WTC11 (cell line): ENCODE measurements at regions of chr11 and their contacts with region 1.

Region 1: DNA sequence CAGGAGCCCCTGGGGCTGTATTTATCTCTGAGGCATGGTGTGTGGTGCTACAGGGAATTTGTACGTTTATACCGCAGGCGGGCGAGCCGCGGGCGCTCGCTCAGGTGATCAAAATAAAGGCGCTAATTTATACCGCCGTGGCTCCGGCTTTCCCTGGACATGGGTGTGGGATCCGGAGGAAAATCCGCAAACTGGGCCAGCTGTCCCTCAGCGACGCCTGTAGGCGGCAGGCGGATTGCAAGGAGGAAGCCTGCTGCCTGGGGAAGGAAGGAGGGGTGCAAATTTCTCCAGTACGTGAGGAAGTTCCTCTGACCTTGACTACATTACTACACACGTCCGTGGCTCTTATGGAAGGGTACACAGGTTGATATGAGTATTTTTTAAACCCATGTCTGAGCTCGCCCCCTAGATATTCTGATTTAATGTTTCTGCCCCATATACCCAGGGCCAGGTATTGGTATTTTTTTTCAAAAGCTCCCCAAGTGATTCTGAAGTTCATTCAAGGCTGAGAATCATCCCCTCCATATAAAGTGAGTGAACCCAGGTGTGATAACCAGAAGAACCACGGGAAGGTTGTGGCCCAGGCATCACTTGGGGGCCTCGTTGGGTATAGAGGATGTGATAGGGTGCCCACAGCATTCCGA is 2.8 kb downstream of the MYOD1 start:
- DNase-seq: peak; percentile 75
- ATAC-seq: peak; percentile 12
- H3K4me3 Mint-ChIP-seq: peak overlapping the region; percentile 58
- H3K27ac Mint-ChIP-seq: no peak overlapping the region
- H3K4me1 Mint-ChIP-seq: peaks cover 11% of the 10 kb centered on the region
- H3K27me3 Mint-ChIP-seq: peaks cover 18% of the 10 kb centered on the region
- CTCF ChIP-seq: no peak

Region 2: DNA sequence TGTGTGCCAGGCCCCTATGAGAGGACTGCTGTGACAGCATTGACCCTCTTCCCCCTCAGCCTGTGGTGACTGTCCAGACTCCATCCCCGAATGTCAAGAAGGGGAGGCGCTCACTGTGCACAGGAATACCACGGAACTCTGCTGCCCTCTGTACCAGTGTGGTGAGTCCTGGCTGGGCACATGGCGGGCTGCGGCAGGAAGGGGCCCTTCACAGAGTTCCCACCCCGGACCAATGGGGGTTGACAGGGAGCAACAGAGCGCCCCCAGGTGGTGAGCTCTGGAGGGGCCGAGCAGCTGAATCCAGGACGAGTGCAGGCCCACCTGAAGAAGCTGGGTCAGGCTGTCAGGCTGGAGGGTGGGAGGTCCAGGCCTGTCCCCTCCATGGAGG is 86.6 kb before region 1 on chr11:
- CTCF ChIA-PET with region 1: interaction called, 12 read pairs
- POLR2A ChIA-PET with region 1: no interaction called
- DNase-seq: peak; percentile 54
- ATAC-seq: peak; percentile 46
- H3K4me3 Mint-ChIP-seq: no peak overlapping the region
- H3K27ac Mint-ChIP-seq: no peak overlapping the region
- H3K4me1 Mint-ChIP-seq: no peaks in the 10 kb centered on the region
- H3K27me3 Mint-ChIP-seq: no peaks in the 10 kb centered on the region; the same call in 1 of the 2 replicates
- CTCF ChIP-seq: peak; percentile 54

Region 3: DNA sequence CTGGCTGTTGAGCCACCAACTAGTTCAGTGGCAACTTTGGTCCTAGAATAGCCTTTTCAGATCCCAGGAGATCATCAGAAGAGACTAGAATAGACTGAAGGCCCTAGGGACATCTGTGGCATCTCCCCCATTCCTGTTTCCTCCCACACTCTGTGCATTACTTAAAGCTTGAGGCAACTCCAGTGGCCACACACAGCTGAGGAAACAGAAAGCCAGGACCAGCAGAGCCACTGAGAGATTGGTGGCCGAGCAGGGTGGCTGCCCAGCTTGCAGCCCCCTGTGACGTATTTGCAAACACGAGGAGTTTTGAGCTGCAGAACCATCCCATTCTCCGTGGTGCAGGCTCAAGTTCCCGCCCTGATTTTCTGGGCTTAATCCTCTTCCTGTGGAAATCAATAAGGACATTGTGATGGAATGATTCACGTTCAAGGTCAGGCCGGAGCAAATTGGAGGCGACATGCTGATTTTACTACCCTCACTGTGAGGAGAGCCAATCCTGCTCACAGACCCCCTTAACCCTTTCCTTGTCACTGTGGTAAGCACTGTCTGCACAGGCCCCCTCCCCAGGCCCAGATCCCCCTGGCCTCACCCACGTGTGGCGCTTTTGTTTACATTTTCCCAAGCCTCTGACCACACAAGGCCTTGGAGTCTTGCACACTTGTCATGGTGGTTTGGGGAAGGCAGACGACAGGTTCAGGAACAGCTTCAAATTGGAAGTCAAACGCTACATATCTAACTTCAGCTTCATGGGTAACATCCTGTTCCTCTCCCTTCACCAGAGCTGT is 71.8 kb before region 1 on chr11:
- CTCF ChIA-PET with region 1: interaction called, 22 read pairs
- POLR2A ChIA-PET with region 1: no interaction called
- DNase-seq: no peak
- ATAC-seq: peak; percentile 57
- H3K4me3 Mint-ChIP-seq: no peak overlapping the region
- H3K27ac Mint-ChIP-seq: no peak overlapping the region
- H3K4me1 Mint-ChIP-seq: peaks cover 31% of the 10 kb centered on the region
- H3K27me3 Mint-ChIP-seq: peaks cover 70% of the 10 kb centered on the region
- CTCF ChIP-seq: no peak